Colonic mucosa (tissue), 4 donors: ENCODE measurements at regions of chr5 and their contacts with region 1.

Region 1: GRCh38 chr5:146273109-146273508 is 65.5 kb upstream of the POU4F3 start:
- DNase-seq: no peak
- H3K4me3 ChIP-seq: no peak overlapping the region
- H3K27ac ChIP-seq: no peak overlapping the region
- H3K4me1 ChIP-seq: no peaks in the 10 kb centered on the region
- H3K27me3 ChIP-seq: no peaks in the 10 kb centered on the region
- CTCF ChIP-seq: no peak

Region 2: GRCh38 chr5:146137967-146138403 is 135.1 kb before region 1 on chr5:
- intact Hi-C with region 1: loop called (anchors 10 kb)
- DNase-seq: peak; percentile 24
- H3K4me3 ChIP-seq: no peak overlapping the region
- H3K27ac ChIP-seq: no peak overlapping the region
- H3K4me1 ChIP-seq: no peaks in the 10 kb centered on the region
- H3K27me3 ChIP-seq: no peaks in the 10 kb centered on the region
- CTCF ChIP-seq: no peak